ENCODE measurements at regions of chr19 and their contacts with region 1.

Region 1: GRCh38 chr19:19063183-19064097 is at the start of gene SLC25A42:
- DNase-seq: peak; percentile 99
- H3K4me3 ChIP-seq: peak within 1 kb of the TSS; percentile 82
- H3K27ac ChIP-seq: peak within 1 kb of the TSS; percentile 58
- H3K4me1 ChIP-seq: peaks cover 33% of the 10 kb centered on the region
- CTCF ChIP-seq: no peak
- total RNA-seq, gene SLC25A42: 12.9 and 13.8 TPM in 2 replicates

Region 2: DNA sequence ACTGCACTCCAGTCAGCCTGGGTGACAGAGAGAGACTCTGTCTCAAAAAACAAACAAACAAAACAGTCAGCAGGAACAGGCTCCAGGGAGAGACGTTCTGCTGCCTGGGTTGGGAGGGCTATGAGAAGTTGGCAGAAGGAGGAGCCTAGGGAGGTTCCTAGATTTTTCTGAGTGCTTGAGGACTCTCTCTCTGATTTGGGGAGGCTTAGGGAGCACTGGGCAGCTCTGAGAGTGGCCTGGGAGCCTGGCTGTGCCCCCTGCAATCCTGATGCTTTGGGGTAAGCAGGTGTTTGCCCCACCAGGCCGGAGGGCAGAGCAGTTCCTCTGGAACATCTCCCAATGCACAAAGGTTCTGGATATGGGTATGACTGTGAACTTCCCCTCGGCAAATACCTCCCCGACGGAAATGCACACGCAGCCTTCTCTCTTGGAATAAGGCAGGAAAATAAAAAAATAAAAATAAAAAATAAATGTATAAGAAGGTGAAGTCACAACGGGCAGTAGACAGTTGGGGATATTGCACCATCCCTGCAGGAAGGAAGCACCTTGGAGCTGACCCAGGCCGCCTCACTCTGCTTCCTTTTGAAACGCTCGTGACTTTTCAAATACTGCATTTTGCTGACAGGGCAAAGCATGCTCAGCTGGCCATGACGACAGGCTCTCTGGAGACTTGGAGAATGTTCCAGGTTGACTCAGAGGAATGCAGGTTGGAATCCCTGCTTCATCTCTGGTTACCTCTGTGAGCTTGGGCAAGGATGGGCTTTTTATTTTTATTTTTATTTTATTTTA is 95.9 kb before region 1 on chr19:
- CTCF ChIA-PET with region 1: no interaction called
- POLR2A ChIA-PET with region 1: no interaction called
- intact Hi-C with region 1: no loop called
- DNase-seq: no peak
- H3K4me3 ChIP-seq: no peak overlapping the region
- H3K27ac ChIP-seq: no peak overlapping the region
- H3K4me1 ChIP-seq: peaks cover 6% of the 10 kb centered on the region
- CTCF ChIP-seq: no peak

Region 3: DNA sequence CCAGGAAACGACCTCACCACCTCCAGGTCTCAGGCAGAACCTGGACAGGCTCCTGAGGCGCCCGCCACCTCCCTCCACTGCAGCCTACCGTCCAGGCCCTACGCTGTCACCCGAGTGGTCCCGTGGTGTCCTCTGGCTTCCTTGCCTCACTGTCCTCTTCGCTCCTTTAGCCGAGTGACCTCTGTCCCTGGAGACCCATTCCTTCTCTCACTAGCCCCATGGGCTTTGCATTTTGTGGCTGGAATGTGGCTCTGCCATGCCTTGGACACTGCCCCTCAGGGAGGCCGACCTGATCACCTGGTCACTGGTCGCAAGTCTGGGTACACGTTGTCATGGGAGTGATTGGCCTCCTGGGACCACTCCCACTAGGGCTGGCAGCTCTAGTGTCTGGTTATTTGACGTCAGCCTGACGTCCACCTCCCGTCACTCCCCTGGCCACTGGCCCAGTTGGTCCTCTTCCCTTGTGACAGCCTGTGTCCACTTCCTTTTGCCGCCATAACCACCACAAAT is 18.3 kb after region 1 on chr19:
- CTCF ChIA-PET with region 1: no interaction called
- POLR2A ChIA-PET with region 1: no interaction called
- intact Hi-C with region 1: no loop called
- DNase-seq: no peak
- H3K4me3 ChIP-seq: no peak overlapping the region
- H3K27ac ChIP-seq: no peak overlapping the region
- H3K4me1 ChIP-seq: no peaks in the 10 kb centered on the region
- CTCF ChIP-seq: no peak

Region 4: GRCh38 chr19:19115954-19116353 is 52.5 kb after region 1 on chr19:
- CTCF ChIA-PET with region 1: no interaction called
- POLR2A ChIA-PET with region 1: no interaction called
- intact Hi-C with region 1: loop called (anchors 5 kb)
- DNase-seq: peak; percentile 58
- H3K4me3 ChIP-seq: no peak overlapping the region
- H3K27ac ChIP-seq: no peak overlapping the region
- H3K4me1 ChIP-seq: no peaks in the 10 kb centered on the region
- CTCF ChIP-seq: peak; percentile 83

Region 5: GRCh38 chr19:19138169-19138981 is 74.9 kb after region 1 on chr19 and contains the start of gene TMEM161A:
- CTCF ChIA-PET with region 1: no interaction called
- POLR2A ChIA-PET with region 1: no interaction called
- intact Hi-C with region 1: loop called (anchors 1 kb)
- DNase-seq: peak; percentile 98
- H3K4me3 ChIP-seq: peak within 1 kb of the TSS; percentile 85
- H3K27ac ChIP-seq: no peak within 1 kb of the TSS
- H3K4me1 ChIP-seq: peaks cover 19% of the 10 kb centered on the region
- CTCF ChIP-seq: no peak
- total RNA-seq, gene TMEM161A: 28.4 and 31.2 TPM in 2 replicates

Region 6: DNA sequence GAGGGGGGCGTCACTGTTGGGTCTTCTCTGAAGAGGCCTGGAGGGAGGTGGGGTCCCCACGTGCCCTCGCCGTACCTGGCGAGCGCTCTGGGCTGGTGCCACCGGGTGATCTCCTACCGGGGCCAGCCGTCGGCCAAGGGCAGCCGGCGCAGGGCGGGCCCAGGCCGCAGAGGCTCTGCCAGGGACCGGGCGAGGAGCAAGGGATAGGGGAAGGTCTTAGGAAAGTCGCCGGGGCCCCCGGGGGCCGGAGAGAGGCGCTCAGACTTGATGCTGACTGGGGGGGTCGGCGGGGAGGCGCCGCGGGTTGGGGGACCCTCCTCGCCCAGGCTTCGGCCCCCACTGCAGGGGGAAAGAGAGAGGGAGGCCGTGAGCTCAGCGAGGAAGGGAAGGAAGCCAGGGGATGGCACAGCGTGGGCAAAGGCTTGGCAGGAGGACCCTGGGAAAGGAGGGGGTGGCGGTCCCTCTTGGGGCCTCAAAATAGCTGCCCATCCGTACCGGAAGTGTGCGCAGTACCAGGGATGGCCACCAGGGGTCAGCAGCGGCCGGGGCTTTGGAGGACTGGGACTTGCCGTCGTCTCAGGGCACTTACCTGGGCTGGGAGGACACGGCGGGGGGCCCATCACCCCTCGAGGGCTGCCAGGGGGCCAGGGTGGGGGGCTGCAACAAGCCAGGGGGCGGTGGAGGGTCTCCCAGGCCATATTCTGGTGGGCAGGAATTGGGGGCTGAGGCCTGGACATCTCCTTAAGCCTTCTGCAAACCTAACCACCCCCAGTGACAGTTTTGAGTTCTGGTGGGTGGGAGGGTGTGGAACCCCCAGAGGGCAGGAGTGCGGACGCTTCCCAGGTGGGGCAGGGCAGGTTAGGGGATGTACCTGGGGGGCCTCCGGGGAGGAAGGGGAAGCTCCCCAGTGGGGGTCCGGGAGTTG is 82.5 kb after region 1 on chr19:
- CTCF ChIA-PET with region 1: no interaction called
- POLR2A ChIA-PET with region 1: interaction called, 5 read pairs
- intact Hi-C with region 1: loop called (anchors 1 kb)
- DNase-seq: peak; percentile 62
- H3K4me3 ChIP-seq: no peak overlapping the region
- H3K27ac ChIP-seq: peak overlapping the region; percentile 46
- H3K4me1 ChIP-seq: peaks cover 55% of the 10 kb centered on the region
- CTCF ChIP-seq: peak; percentile 80

Region 7: DNA sequence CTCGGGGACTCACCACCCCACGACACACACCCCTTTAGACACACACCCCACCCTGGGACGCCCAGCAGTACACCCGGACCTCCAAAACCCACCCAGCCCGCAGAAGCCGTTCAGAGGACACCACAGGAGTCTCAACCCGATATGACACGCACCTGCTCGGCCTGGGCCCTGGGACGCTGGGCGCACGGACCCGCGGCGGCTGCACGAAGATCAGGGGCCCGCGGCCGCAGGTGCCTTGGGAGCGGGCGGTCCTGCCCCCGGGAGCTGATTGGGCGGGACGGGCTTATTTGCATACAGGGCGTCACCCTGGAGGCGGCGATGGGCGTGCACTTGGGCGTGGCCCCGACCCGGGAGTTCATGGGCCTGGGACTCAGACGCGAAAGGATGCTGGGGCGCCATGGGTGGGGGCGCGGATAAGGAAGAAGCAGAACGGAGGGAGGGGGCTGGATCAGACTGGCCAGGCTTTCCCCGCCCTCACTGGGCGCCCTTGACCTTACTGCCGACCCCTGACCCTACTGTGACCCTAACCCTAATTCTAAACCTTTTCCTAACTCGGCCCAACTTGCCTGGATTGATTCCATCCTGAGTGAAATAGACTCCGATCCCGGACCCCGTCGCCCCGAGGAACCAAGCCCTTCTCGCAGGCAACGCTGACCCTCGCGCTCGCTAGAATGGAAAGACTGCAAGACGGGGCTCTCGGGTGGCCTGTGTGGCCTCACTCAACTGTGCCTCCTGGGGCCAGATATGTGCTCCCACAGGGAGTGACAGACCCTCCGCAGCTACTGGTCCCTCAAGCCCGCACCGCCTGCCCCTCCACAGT is 106.8 kb after region 1 on chr19 and contains the start of gene MEF2B:
- CTCF ChIA-PET with region 1: interaction called, 3 read pairs
- POLR2A ChIA-PET with region 1: interaction called, 3 read pairs
- intact Hi-C with region 1: loop called (anchors 2 kb)
- DNase-seq: peak; percentile 96
- H3K4me3 ChIP-seq: peak within 1 kb of the TSS; percentile 93
- H3K27ac ChIP-seq: peak within 1 kb of the TSS; percentile 98
- H3K4me1 ChIP-seq: peaks cover 71% of the 10 kb centered on the region
- CTCF ChIP-seq: no peak
- total RNA-seq, gene MEF2B: 175 and 201 TPM in 2 replicates

Region 8: DNA sequence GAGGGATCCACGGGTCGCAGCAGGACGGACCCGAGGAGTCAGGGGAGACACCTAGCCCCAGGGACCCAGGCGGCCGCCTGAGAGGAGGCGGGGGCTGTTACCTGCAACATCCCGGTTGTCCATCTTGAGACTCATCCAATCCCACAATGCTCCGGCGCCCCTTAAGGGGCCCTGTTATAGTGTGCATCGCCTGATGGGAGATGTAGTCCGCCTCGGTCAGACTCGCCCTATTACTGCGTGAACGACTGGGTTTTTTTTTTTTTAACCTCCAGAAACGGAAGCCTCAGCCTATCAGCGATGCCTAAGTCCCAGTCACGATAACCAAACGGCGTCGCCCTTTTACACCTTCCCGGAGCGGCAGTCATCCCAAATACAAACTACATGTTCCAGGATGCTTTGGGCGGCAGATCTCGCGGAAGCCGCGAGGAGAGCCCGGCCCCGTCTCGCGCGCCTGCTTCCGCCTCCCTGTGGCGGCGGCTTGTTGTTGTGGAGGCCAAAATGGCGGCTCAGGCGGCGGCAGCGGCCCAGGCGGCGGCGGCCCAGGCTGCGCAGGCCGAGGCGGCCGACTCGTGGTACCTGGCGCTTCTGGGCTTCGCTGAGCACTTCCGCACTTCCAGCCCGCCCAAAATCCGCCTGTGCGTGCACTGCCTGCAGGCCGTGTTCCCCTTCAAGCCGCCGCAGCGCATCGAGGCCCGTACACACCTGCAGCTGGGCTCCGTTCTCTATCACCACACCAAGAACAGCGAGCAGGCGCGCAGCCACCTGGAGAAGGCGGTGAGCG is 257.1 kb after region 1 on chr19 and contains the starts of genes MAU2 and SUGP1:
- CTCF ChIA-PET with region 1: no interaction called
- POLR2A ChIA-PET with region 1: no interaction called
- intact Hi-C with region 1: loop called (anchors 10 kb)
- DNase-seq: peak; percentile 95
- H3K4me3 ChIP-seq: peak within 1 kb of the TSS; percentile 86
- H3K27ac ChIP-seq: peak within 1 kb of the TSS; percentile 68
- H3K4me1 ChIP-seq: peaks cover 26% of the 10 kb centered on the region
- CTCF ChIP-seq: no peak
- total RNA-seq, gene MAU2: 31.9 and 58.7 TPM in 2 replicates
- total RNA-seq, gene SUGP1: 34.6 and 37.9 TPM in 2 replicates